Esophagus muscularis mucosa (tissue), 4 donors: ENCODE measurements at regions of chr5 and their contacts with region 1.

Region 1: GRCh38 chr5:81851481-81852178 is 100.7 kb upstream of the SSBP2 start:
- DNase-seq: peak; percentile 97
- H3K4me3 ChIP-seq: peak overlapping the region; percentile 52 to 67 (median 58)
- H3K27ac ChIP-seq: peak overlapping the region; percentile 80 to 91 (median 86)
- H3K4me1 ChIP-seq: peaks cover 39 to 85% (median 81%) of the 10 kb centered on the region in 4 donors
- H3K27me3 ChIP-seq: no peaks in the 10 kb centered on the region
- CTCF ChIP-seq: peak in 1 of 3 experiments; percentile 14
- EP300 ChIP-seq: peak; percentile 36
- POLR2A ChIP-seq: no peak

Region 2: DNA sequence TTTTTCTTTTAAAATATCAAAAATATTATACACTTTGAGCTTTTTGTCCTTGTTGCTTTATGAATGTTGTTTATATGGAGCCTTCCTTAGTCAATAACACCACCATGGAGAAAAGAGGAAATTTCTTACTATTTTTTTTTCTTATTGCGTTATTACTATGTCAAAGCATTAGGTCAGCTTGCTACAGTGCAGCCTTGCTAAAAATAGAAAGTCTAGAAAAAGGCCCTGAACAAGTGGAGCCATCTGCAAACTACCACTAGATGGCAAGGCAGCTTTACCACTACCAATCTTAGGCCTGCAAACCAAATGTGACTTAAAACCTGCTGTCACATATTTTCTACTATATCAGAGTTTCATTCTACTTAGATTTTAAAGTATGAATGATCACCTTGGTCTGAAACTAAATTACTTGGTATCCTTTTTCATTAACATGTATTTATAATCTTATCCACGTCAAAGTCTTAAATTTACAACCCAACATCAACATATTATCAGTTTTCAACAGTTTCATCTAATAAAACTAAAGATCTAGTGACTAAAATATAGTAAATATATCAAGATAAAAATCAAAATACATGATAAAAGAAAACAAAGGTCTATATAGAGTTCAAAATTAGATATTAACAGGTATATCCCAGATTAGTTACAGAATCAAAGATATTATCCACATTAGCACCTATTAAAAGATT is 344.6 kb before region 1 on chr5:
- intact Hi-C with region 1: loop called (anchors 2 kb)
- DNase-seq: no peak
- H3K4me3 ChIP-seq: no peak overlapping the region
- H3K27ac ChIP-seq: peak overlapping the region in 3 of 4 donors; percentile 8 to 34 (median 29)
- H3K4me1 ChIP-seq: peaks cover 10 to 25% (median 19%) of the 10 kb centered on the region in 4 donors
- H3K27me3 ChIP-seq: no peaks in the 10 kb centered on the region
- CTCF ChIP-seq: peak; percentile 88 to 94 (median 90)
- EP300 ChIP-seq: no peak
- POLR2A ChIP-seq: no peak

Region 3: GRCh38 chr5:81787474-81788242 is 64.0 kb before region 1 on chr5:
- intact Hi-C with region 1: loop called (anchors 1 kb)
- DNase-seq: no peak
- H3K4me3 ChIP-seq: peak overlapping the region; percentile 8 to 35 (median 22)
- H3K27ac ChIP-seq: peak overlapping the region; percentile 41 to 71 (median 58)
- H3K4me1 ChIP-seq: peaks cover 20 to 38% (median 36%) of the 10 kb centered on the region in 4 donors
- H3K27me3 ChIP-seq: no peaks in the 10 kb centered on the region
- CTCF ChIP-seq: no peak
- EP300 ChIP-seq: no peak
- POLR2A ChIP-seq: no peak